ENCODE measurements at regions of chr2 and their contacts with region 1.

Region 1: DNA sequence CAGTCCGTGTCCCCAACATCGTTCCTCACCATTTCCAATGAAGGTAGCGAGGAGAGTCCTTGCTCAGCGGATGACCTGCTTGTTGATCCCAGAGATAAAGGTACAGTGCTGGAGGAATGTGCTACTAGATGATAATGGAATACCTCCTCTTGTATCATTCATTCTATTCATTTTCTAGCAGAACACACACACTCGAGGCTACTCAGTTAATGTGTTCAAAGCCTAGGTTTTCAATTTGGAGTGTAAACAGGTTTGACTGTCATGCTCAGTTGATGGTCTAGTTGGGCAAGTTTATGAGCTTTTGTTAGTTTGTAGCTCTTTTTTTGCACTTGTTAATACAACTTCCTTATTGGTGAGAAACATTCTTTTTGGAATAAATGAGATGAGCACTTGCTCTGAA is 114.2 kb downstream of the ICA1L start:
- DNase-seq: no peak
- ATAC-seq: no peak
- H3K4me3 ChIP-seq: no peak overlapping the region
- H3K4me3 Mint-ChIP-seq: no peak overlapping the region
- H3K27ac ChIP-seq: no peak overlapping the region
- H3K27ac Mint-ChIP-seq: peak overlapping the region; percentile 22
- H3K4me1 ChIP-seq: peaks cover 29% of the 10 kb centered on the region
- H3K4me1 Mint-ChIP-seq: peaks cover 40% of the 10 kb centered on the region
- H3K27me3 ChIP-seq: no peaks in the 10 kb centered on the region
- H3K27me3 Mint-ChIP-seq: no peaks in the 10 kb centered on the region
- CTCF ChIP-seq: no peak

Region 2: DNA sequence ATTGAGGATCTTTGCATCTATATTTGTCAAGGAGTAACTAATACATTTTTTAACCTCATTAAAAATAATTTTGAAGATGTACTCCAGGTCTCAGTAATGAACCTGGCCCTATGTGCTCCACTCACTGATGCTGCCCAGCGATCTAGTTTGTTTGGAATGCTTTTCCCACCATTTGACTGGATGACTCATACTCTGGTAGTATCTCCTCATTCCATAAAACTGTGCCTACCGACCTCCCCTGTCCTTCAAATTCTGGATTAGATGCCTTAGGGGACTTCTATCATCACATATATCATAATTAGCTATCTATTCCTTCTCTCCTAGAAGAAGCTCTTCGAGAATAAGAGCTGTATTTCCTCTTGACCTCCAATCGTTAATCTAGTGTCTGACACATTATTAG is 38.7 kb before region 1 on chr2:
- CTCF ChIA-PET with region 1: no interaction called
- POLR2A ChIA-PET with region 1: no interaction called
- intact Hi-C with region 1: no loop called
- DNase-seq: no peak
- ATAC-seq: no peak
- H3K4me3 ChIP-seq: no peak overlapping the region
- H3K4me3 Mint-ChIP-seq: no peak overlapping the region
- H3K27ac ChIP-seq: no peak overlapping the region
- H3K27ac Mint-ChIP-seq: peak overlapping the region; percentile 82
- H3K4me1 ChIP-seq: peaks cover 36% of the 10 kb centered on the region
- H3K4me1 Mint-ChIP-seq: peaks cover 48% of the 10 kb centered on the region
- H3K27me3 ChIP-seq: no peaks in the 10 kb centered on the region
- H3K27me3 Mint-ChIP-seq: no peaks in the 10 kb centered on the region
- CTCF ChIP-seq: no peak

Region 3: GRCh38 chr2:202771741-202772460 is 14.6 kb after region 1 on chr2:
- CTCF ChIA-PET with region 1: interaction called, 4 read pairs
- POLR2A ChIA-PET with region 1: no interaction called
- intact Hi-C with region 1: loop called in 1 of 2 experiments (anchors 1 kb)
- DNase-seq: no peak
- ATAC-seq: no peak
- H3K4me3 ChIP-seq: no peak overlapping the region
- H3K4me3 Mint-ChIP-seq: no peak overlapping the region
- H3K27ac ChIP-seq: no peak overlapping the region
- H3K27ac Mint-ChIP-seq: no peak overlapping the region
- H3K4me1 ChIP-seq: peaks cover 33% of the 10 kb centered on the region
- H3K4me1 Mint-ChIP-seq: peaks cover 16% of the 10 kb centered on the region
- H3K27me3 ChIP-seq: no peaks in the 10 kb centered on the region
- H3K27me3 Mint-ChIP-seq: no peaks in the 10 kb centered on the region
- CTCF ChIP-seq: no peak

Region 4: DNA sequence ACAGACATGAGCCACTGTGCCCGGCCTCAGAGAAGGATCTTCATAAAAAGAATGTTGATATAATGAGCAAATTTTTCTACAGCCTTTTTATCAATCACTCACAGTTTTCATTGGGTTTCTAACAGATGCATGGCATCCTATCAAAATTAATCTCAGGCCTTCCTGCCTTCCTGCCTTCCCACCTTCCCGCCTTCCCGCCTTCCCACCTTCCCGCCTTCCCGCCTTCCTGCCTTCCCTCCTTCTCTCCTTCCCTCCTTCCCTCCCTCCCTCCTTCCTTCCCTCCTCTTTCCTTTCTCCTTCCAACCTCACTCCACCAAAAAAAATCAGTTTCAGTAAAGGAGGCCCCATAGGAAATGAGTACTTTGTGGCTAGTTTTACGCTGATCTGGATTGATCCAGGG is 203.2 kb after region 1 on chr2:
- CTCF ChIA-PET with region 1: no interaction called
- POLR2A ChIA-PET with region 1: no interaction called
- intact Hi-C with region 1: no loop called
- DNase-seq: no peak
- ATAC-seq: no peak
- H3K4me3 ChIP-seq: no peak overlapping the region
- H3K4me3 Mint-ChIP-seq: no peak overlapping the region
- H3K27ac ChIP-seq: no peak overlapping the region
- H3K27ac Mint-ChIP-seq: no peak overlapping the region
- H3K4me1 ChIP-seq: no peaks in the 10 kb centered on the region
- H3K4me1 Mint-ChIP-seq: no peaks in the 10 kb centered on the region
- H3K27me3 ChIP-seq: no peaks in the 10 kb centered on the region
- H3K27me3 Mint-ChIP-seq: no peaks in the 10 kb centered on the region
- CTCF ChIP-seq: no peak

Region 5: GRCh38 chr2:203379156-203379555 is 621.8 kb after region 1 on chr2:
- CTCF ChIA-PET with region 1: no interaction called
- POLR2A ChIA-PET with region 1: no interaction called
- intact Hi-C with region 1: no loop called
- DNase-seq: no peak
- ATAC-seq: no peak
- H3K4me3 ChIP-seq: no peak overlapping the region
- H3K4me3 Mint-ChIP-seq: no peak overlapping the region
- H3K27ac ChIP-seq: no peak overlapping the region
- H3K27ac Mint-ChIP-seq: no peak overlapping the region
- H3K4me1 ChIP-seq: no peaks in the 10 kb centered on the region
- H3K4me1 Mint-ChIP-seq: peaks cover 3% of the 10 kb centered on the region
- H3K27me3 ChIP-seq: no peaks in the 10 kb centered on the region
- H3K27me3 Mint-ChIP-seq: no peaks in the 10 kb centered on the region
- CTCF ChIP-seq: no peak

Region 6: DNA sequence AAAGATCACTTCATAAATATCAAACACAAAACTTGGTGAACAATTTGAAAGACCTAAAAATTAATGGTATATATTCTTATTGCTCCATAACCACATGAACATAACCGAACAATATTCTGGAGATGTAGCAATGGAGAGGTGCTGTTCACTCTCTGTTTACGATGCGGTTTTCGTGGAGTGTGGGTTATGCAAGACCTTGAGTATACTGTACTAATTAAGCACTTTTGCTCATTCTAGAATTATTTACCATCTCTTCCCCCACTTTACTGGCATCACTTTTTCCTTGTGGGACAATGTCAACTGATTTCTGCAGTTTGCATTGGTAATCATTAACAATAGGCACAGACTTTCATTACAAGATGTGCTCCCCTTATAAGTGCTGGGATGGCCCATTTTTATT is 680.2 kb after region 1 on chr2:
- CTCF ChIA-PET with region 1: no interaction called
- POLR2A ChIA-PET with region 1: no interaction called
- intact Hi-C with region 1: no loop called
- DNase-seq: no peak
- ATAC-seq: no peak
- H3K4me3 ChIP-seq: no peak overlapping the region
- H3K4me3 Mint-ChIP-seq: no peak overlapping the region
- H3K27ac ChIP-seq: no peak overlapping the region
- H3K27ac Mint-ChIP-seq: no peak overlapping the region
- H3K4me1 ChIP-seq: no peaks in the 10 kb centered on the region
- H3K4me1 Mint-ChIP-seq: no peaks in the 10 kb centered on the region
- H3K27me3 ChIP-seq: no peaks in the 10 kb centered on the region
- H3K27me3 Mint-ChIP-seq: no peaks in the 10 kb centered on the region
- CTCF ChIP-seq: no peak